Panc1 (cell line): ENCODE measurements at regions of chr18 and their contacts with region 1.

Region 1: GRCh38 chr18:79988451-79989194 is at the start of gene TXNL4A:
- DNase-seq: peak; percentile 52
- ATAC-seq: peak; percentile 99
- H3K4me3 ChIP-seq: peak within 1 kb of the TSS; percentile 68 to 87
- H3K27ac ChIP-seq: peak within 1 kb of the TSS; percentile 96
- H3K4me1 ChIP-seq: peaks cover 13% of the 10 kb centered on the region
- H3K27me3 ChIP-seq: no peaks in the 10 kb centered on the region
- CTCF ChIP-seq: no peak
- total RNA-seq, gene TXNL4A: 416 TPM

Region 2: GRCh38 chr18:79871481-79872091 is 117.0 kb before region 1 on chr18:
- CTCF ChIA-PET with region 1: no interaction called
- POLR2A ChIA-PET with region 1: interaction called, 10 read pairs
- in situ Hi-C with region 1: no loop called
- intact Hi-C with region 1: no loop called
- DNase-seq: no peak
- ATAC-seq: no peak
- H3K4me3 ChIP-seq: no peak overlapping the region
- H3K27ac ChIP-seq: no peak overlapping the region
- H3K4me1 ChIP-seq: 0 out of 2 replicates have a peak, but pooled peaks cover under 1% of the 10 kb centered on the region
- H3K27me3 ChIP-seq: no peaks in the 10 kb centered on the region; the same call in 1 of the 2 replicates
- CTCF ChIP-seq: no peak

Region 3: GRCh38 chr18:80056095-80056494 is 67.5 kb after region 1 on chr18:
- CTCF ChIA-PET with region 1: interaction called, 11 read pairs
- POLR2A ChIA-PET with region 1: no interaction called
- in situ Hi-C with region 1: no loop called
- intact Hi-C with region 1: no loop called
- DNase-seq: no peak
- ATAC-seq: no peak
- H3K4me3 ChIP-seq: no peak overlapping the region
- H3K27ac ChIP-seq: no peak overlapping the region
- H3K4me1 ChIP-seq: peaks cover 3% of the 10 kb centered on the region; the same call in 1 of the 2 replicates
- H3K27me3 ChIP-seq: no peaks in the 10 kb centered on the region
- CTCF ChIP-seq: no peak

Region 4: GRCh38 chr18:80241919-80242777 is 253.5 kb after region 1 on chr18:
- CTCF ChIA-PET with region 1: no interaction called
- POLR2A ChIA-PET with region 1: no interaction called
- in situ Hi-C with region 1: no loop called
- intact Hi-C with region 1: no loop called
- DNase-seq: no peak
- ATAC-seq: no peak
- H3K4me3 ChIP-seq: no peak overlapping the region
- H3K27ac ChIP-seq: no peak overlapping the region
- H3K4me1 ChIP-seq: peaks cover 10% of the 10 kb centered on the region; the same call in 1 of the 2 replicates
- H3K27me3 ChIP-seq: no peaks in the 10 kb centered on the region
- CTCF ChIP-seq: no peak